GM13977 (cell line): ENCODE measurements at regions of chr10 and their contacts with region 1.

Region 1: DNA sequence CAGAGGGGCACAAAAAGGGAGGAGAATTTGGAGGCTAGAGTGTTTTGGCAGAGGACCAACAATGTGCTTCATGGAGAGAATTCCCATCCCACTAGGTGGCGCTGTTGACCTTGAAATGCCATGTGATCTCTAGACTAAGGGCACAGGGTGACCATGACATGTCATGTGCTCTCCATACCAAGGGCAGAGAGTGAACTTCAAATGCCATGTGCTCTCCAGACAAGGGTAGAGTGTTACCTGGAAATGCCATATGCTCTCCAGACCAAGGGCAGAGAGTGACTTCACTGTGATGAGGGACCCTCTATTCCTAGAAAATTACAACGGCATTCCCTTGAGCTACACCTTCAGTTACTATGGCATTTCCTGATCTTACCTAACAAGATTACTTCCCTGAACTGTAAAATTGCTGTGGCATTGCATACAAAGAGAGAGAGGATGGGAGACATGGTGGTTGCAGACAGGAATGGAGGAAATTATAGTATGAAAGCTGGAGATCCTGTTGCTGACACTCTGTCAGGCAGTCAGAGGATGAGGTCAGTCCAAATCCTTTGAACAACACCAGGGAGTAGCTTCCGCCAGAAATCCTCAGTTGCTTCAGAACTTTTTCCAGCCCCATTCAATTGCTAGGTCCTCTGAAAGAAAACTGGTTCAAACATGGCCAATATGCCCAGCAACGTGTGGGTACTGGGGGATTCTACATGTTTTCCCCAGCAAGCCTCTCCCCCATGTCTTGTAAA is 60.9 kb upstream of the ACSM6 start:
- DNase-seq: peak; percentile 48
- CTCF ChIP-seq: peak; percentile 80

Region 2: GRCh38 chr10:95056744-95057363 is 76.3 kb before region 1 on chr10:
- in situ Hi-C with region 1: no loop called
- DNase-seq: no peak
- CTCF ChIP-seq: no peak

Region 3: DNA sequence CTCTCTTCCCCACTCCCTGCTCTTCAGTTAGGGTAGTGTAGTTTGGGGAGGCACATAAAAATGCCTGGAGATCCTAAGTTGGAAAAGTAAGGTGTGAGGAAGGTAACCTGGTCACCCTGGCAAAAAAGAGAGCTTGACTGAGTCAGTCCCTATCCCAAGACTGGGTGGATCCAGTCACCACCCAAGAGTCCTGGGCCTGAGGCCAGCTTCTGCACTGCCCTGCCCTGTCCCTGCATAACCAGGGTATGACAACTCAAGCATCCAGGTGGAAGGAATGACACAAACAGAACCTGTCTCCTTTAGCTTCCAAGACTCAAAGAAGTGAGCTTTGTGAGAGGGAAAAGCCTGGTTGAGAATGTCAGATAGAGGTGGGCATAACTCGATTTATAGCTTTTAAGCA is 454.8 kb after region 1 on chr10:
- in situ Hi-C with region 1: loop called (anchors 25 kb)
- DNase-seq: no peak
- CTCF ChIP-seq: no peak